K562 (cell line): ENCODE measurements at regions of chr4 and their contacts with region 1.

Region 1: GRCh38 chr4:168917138-168917779 is 92.8 kb downstream of the CBR4 start:
- DNase-seq: peak; percentile 28 to 41 (median 34)
- ATAC-seq: peak; percentile 71
- H3K4me3 ChIP-seq: no peak overlapping the region
- H3K27ac ChIP-seq: no peak overlapping the region
- H3K4me1 ChIP-seq: no peaks in the 10 kb centered on the region
- H3K27me3 ChIP-seq: no peaks in the 10 kb centered on the region
- CTCF ChIP-seq: peak in 2 of 3 experiments; percentile 22 to 60; a peak in 3 of 6 replicates
- EP300 ChIP-seq: no peak
- POLR2A ChIP-seq: no peak
- RAD21 ChIP-seq: peak; percentile 54 to 62

Region 2: GRCh38 chr4:168183717-168184608 is 733.3 kb before region 1 on chr4:
- CTCF ChIA-PET with region 1: interaction called, 7 read pairs
- POLR2A ChIA-PET with region 1: no interaction called
- in situ Hi-C with region 1: loop called (anchors 5 kb)
- intact Hi-C with region 1: loop called (anchors 2 kb)
- DNase-seq: peak in 3 of 4 experiments; percentile 10 to 36 (median 11)
- ATAC-seq: no peak
- H3K4me3 ChIP-seq: no peak overlapping the region
- H3K27ac ChIP-seq: no peak overlapping the region
- H3K4me1 ChIP-seq: no peaks in the 10 kb centered on the region
- H3K27me3 ChIP-seq: no peaks in the 10 kb centered on the region
- CTCF ChIP-seq: peak in 2 of 3 experiments; percentile 17 to 54; a peak in 2 of 6 replicates
- EP300 ChIP-seq: no peak
- POLR2A ChIP-seq: no peak
- RAD21 ChIP-seq: peak; percentile 78 to 82

Region 3: GRCh38 chr4:168514249-168514852 is 402.9 kb before region 1 on chr4:
- CTCF ChIA-PET with region 1: interaction called, 4 read pairs
- POLR2A ChIA-PET with region 1: no interaction called
- in situ Hi-C with region 1: no loop called
- intact Hi-C with region 1: loop called (anchors 2 kb)
- DNase-seq: peak in 2 of 4 experiments; percentile 12 to 42
- ATAC-seq: no peak
- H3K4me3 ChIP-seq: no peak overlapping the region
- H3K27ac ChIP-seq: no peak overlapping the region
- H3K4me1 ChIP-seq: no peaks in the 10 kb centered on the region; a peak in 1 of 5 replicates
- H3K27me3 ChIP-seq: peaks cover 0 to 4% of the 10 kb centered on the region in 2 experiments; a peak in 1 of 5 replicates
- CTCF ChIP-seq: peak in 2 of 3 experiments; percentile 20 to 49; a peak in 2 of 6 replicates
- EP300 ChIP-seq: no peak
- POLR2A ChIP-seq: no peak
- RAD21 ChIP-seq: peak; percentile 33 to 40; a peak in 2 of 4 replicates

Region 4: GRCh38 chr4:168710353-168710946 is 206.8 kb before region 1 on chr4:
- CTCF ChIA-PET with region 1: no interaction called
- POLR2A ChIA-PET with region 1: no interaction called
- in situ Hi-C with region 1: no loop called
- intact Hi-C with region 1: loop called (anchors 2 kb)
- DNase-seq: peak in 1 of 4 experiments; percentile 11
- ATAC-seq: peak; percentile 49; the same call in 1 of the 3 replicates
- H3K4me3 ChIP-seq: no peak overlapping the region
- H3K27ac ChIP-seq: no peak overlapping the region
- H3K4me1 ChIP-seq: no peaks in the 10 kb centered on the region
- H3K27me3 ChIP-seq: no peaks in the 10 kb centered on the region
- CTCF ChIP-seq: peak in 1 of 3 experiments; percentile 31; a peak in 2 of 6 replicates
- EP300 ChIP-seq: no peak
- POLR2A ChIP-seq: no peak
- RAD21 ChIP-seq: peak in 1 of 2 experiments; percentile 25; a peak in 2 of 4 replicates

Region 5: GRCh38 chr4:169069972-169070902 is 153.0 kb after region 1 on chr4:
- CTCF ChIA-PET with region 1: no interaction called
- POLR2A ChIA-PET with region 1: no interaction called
- in situ Hi-C with region 1: no loop called
- intact Hi-C with region 1: no loop called
- DNase-seq: no peak
- ATAC-seq: no peak
- H3K4me3 ChIP-seq: no peak overlapping the region
- H3K27ac ChIP-seq: no peak overlapping the region
- H3K4me1 ChIP-seq: no peaks in the 10 kb centered on the region; a peak in 1 of 5 replicates
- H3K27me3 ChIP-seq: peaks cover 14 to 37% of the 10 kb centered on the region in 2 experiments; a peak in 4 of 5 replicates
- CTCF ChIP-seq: no peak
- EP300 ChIP-seq: no peak
- POLR2A ChIP-seq: no peak
- RAD21 ChIP-seq: no peak